Mammary epithelial cell (primary cell): ENCODE measurements at regions of chr7 and their contacts with region 1.

Region 1: DNA sequence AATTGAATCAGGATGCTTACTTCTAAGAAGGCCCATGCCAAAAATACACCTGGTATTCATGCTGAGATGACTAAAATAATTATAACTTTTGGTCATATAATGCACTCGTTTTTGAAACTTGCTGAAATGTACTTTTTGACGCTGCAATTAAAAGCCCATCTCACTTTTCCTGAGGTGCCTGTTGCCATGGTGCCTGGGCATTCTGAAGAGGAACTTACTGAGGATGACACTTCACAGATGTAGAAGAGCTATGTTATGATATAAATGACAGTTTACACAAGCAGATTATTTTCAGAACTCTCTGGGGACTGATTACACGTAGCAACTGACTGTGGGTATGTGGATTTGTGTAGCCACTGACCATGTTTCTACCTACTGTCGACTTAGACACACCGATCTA is 182.4 kb downstream of the TPK1 start:
- DNase-seq: no peak
- H3K4me3 ChIP-seq: no peak overlapping the region
- H3K27ac ChIP-seq: no peak overlapping the region
- H3K4me1 ChIP-seq: no peaks in the 10 kb centered on the region
- H3K27me3 ChIP-seq: no peaks in the 10 kb centered on the region
- CTCF ChIP-seq: no peak

Region 2: GRCh38 chr7:144720140-144720539 is 66.7 kb after region 1 on chr7:
- CTCF ChIA-PET with region 1: no interaction called
- dilution Hi-C with region 1: loop called (anchors 5 kb)
- in situ Hi-C with region 1: no loop called
- intact Hi-C with region 1: no loop called
- DNase-seq: peak; percentile 88
- H3K4me3 ChIP-seq: no peak overlapping the region
- H3K27ac ChIP-seq: no peak overlapping the region
- H3K4me1 ChIP-seq: peaks cover 16% of the 10 kb centered on the region
- H3K27me3 ChIP-seq: no peaks in the 10 kb centered on the region
- CTCF ChIP-seq: no peak

Region 3: GRCh38 chr7:145263886-145264285 is 610.4 kb after region 1 on chr7:
- CTCF ChIA-PET with region 1: no interaction called
- dilution Hi-C with region 1: no loop called
- in situ Hi-C with region 1: no loop called
- intact Hi-C with region 1: no loop called
- DNase-seq: no peak
- H3K4me3 ChIP-seq: no peak overlapping the region
- H3K27ac ChIP-seq: no peak overlapping the region
- H3K4me1 ChIP-seq: no peaks in the 10 kb centered on the region
- H3K27me3 ChIP-seq: no peaks in the 10 kb centered on the region
- CTCF ChIP-seq: no peak